Mammary epithelial cell (primary cell): ENCODE measurements at regions of chr11 and their contacts with region 1.

Region 1: GRCh38 chr11:57667736-57668435 is at the start of gene ZDHHC5:
- DNase-seq: peak; percentile 99
- H3K4me3 ChIP-seq: peak within 1 kb of the TSS; percentile 99 to 100 (median 99)
- H3K27ac ChIP-seq: peak within 1 kb of the TSS; percentile 95
- H3K4me1 ChIP-seq: peaks cover 20% of the 10 kb centered on the region
- H3K27me3 ChIP-seq: no peaks in the 10 kb centered on the region
- CTCF ChIP-seq: peak; percentile 16 to 52
- total RNA-seq, gene ZDHHC5: 81.7 to 101 TPM

Region 2: DNA sequence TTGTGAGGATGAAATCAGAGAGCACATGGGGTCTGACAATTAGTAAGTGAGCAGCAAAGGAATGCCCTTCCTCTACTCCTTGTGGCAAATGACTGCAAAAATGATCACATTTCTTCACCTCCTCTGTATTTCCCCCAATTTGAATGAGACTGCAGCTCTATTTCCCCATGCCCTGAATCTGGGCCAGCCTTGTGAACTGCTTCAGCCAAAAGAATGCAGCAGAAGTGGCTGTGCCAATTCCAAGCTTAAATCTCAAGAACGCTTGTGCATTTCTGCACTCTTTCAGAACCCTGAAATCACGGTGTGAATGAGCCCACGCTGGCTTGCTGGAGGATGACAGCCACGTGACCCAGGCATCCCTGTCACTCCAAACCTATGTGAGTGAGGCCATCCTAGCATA is 250.8 kb before region 1 on chr11:
- CTCF ChIA-PET with region 1: no interaction called
- dilution Hi-C with region 1: no loop called
- in situ Hi-C with region 1: no loop called
- intact Hi-C with region 1: no loop called
- DNase-seq: no peak
- H3K4me3 ChIP-seq: no peak overlapping the region
- H3K27ac ChIP-seq: no peak overlapping the region
- H3K4me1 ChIP-seq: no peaks in the 10 kb centered on the region
- H3K27me3 ChIP-seq: no peaks in the 10 kb centered on the region
- CTCF ChIP-seq: no peak

Region 3: GRCh38 chr11:57619331-57619730 is 48.6 kb before region 1 on chr11:
- CTCF ChIA-PET with region 1: no interaction called
- dilution Hi-C with region 1: no loop called
- in situ Hi-C with region 1: no loop called
- intact Hi-C with region 1: no loop called
- DNase-seq: no peak
- H3K4me3 ChIP-seq: no peak overlapping the region
- H3K27ac ChIP-seq: no peak overlapping the region
- H3K4me1 ChIP-seq: no peaks in the 10 kb centered on the region
- H3K27me3 ChIP-seq: no peaks in the 10 kb centered on the region
- CTCF ChIP-seq: peak; percentile 30 to 36

Region 4: GRCh38 chr11:57657194-57658022 is 10.5 kb before region 1 on chr11 and contains the start of gene CLP1:
- CTCF ChIA-PET with region 1: no interaction called
- dilution Hi-C with region 1: no loop called
- in situ Hi-C with region 1: no loop called
- intact Hi-C with region 1: loop called (anchors 1 kb)
- DNase-seq: peak; percentile 99
- H3K4me3 ChIP-seq: peak within 1 kb of the TSS; percentile 68 to 86 (median 84)
- H3K27ac ChIP-seq: peak within 1 kb of the TSS; percentile 64
- H3K4me1 ChIP-seq: peaks cover 13% of the 10 kb centered on the region
- H3K27me3 ChIP-seq: no peaks in the 10 kb centered on the region
- CTCF ChIP-seq: no peak
- total RNA-seq, gene CLP1: 16.0 to 19.0 TPM

Region 5: GRCh38 chr11:57712256-57713150 is 44.6 kb after region 1 on chr11 and contains the start of gene TMX2:
- CTCF ChIA-PET with region 1: no interaction called
- dilution Hi-C with region 1: no loop called
- in situ Hi-C with region 1: no loop called
- intact Hi-C with region 1: loop called (anchors 1 kb)
- DNase-seq: peak; percentile 99
- H3K4me3 ChIP-seq: peak within 1 kb of the TSS; percentile 61 to 97 (median 86)
- H3K27ac ChIP-seq: peak within 1 kb of the TSS; percentile 74
- H3K4me1 ChIP-seq: peaks cover 14% of the 10 kb centered on the region
- H3K27me3 ChIP-seq: no peaks in the 10 kb centered on the region
- CTCF ChIP-seq: no peak
- total RNA-seq, gene TMX2: 54.0 to 95.8 TPM

Region 6: DNA sequence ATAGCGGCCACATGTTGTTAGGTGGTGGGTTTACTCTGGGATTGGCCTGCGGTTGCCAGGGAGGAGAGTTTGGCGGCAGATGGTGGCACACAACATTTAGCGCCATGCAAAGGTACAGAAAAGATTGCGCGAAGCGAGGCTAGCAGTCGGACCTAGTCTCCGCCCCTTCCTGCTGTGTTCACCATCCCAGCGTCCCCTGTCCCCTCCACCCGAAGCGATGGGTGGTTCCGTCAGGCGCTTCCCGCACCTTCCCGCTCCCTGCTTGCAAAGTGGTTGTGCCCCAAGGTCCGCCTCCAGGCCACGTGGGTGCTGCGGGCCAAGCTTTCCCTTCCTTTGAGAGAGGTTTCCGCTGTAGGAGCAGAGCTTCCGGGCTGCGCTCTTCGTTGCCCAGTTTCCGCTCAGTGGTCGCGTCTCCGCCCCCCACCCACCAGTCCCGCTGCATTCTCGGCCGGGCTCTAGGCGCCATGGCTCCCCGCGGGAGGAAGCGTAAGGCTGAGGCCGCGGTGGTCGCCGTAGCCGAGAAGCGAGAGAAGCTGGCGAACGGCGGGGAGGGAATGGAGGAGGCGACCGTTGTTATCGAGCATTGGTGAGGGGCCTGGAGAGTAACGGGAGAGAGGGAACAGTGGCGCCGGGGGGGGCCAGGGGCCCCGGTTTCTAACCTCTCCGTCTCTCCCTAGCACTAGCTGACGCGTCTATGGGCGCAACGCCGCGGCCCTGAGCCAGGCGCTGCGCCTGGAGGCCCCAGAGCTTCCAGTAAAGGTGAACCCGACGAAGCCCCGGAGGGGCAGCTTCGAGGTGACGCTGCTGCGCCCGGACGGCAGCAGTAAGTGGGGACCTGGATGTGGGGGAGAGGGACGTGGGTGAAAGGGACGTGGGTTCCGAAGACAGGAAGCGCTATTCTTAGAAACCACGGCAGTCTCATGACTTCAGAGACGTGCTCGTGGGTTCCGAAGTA is 73.5 kb after region 1 on chr11 and contains the start of gene SELENOH:
- CTCF ChIA-PET with region 1: no interaction called
- dilution Hi-C with region 1: loop called (anchors 5 kb)
- in situ Hi-C with region 1: no loop called
- intact Hi-C with region 1: loop called (anchors 1 kb)
- DNase-seq: peak; percentile 95
- H3K4me3 ChIP-seq: peak within 1 kb of the TSS; percentile 67 to 99 (median 81)
- H3K27ac ChIP-seq: peak within 1 kb of the TSS; percentile 65
- H3K4me1 ChIP-seq: peaks cover 6% of the 10 kb centered on the region
- H3K27me3 ChIP-seq: no peaks in the 10 kb centered on the region
- CTCF ChIP-seq: no peak
- total RNA-seq, gene SELENOH: 63.5 to 115 TPM